PC-3 (cell line): ENCODE measurements at regions of chr7 and their contacts with region 1.

Region 1: GRCh38 chr7:99219985-99220384 is 12.1 kb upstream of the KPNA7 start:
- DNase-seq: no peak
- ATAC-seq: no peak
- H3K4me3 ChIP-seq: no peak overlapping the region
- H3K27ac ChIP-seq: no peak overlapping the region
- H3K4me1 ChIP-seq: peaks cover 10% of the 10 kb centered on the region
- H3K27me3 ChIP-seq: no peaks in the 10 kb centered on the region
- CTCF ChIP-seq: no peak

Region 2: GRCh38 chr7:99177165-99177564 is 42.8 kb before region 1 on chr7:
- CTCF ChIA-PET with region 1: no interaction called
- POLR2A ChIA-PET with region 1: no interaction called
- intact Hi-C with region 1: no loop called
- DNase-seq: no peak
- ATAC-seq: no peak
- H3K4me3 ChIP-seq: no peak overlapping the region
- H3K27ac ChIP-seq: no peak overlapping the region
- H3K4me1 ChIP-seq: no peaks in the 10 kb centered on the region
- H3K27me3 ChIP-seq: no peaks in the 10 kb centered on the region
- CTCF ChIP-seq: no peak

Region 3: DNA sequence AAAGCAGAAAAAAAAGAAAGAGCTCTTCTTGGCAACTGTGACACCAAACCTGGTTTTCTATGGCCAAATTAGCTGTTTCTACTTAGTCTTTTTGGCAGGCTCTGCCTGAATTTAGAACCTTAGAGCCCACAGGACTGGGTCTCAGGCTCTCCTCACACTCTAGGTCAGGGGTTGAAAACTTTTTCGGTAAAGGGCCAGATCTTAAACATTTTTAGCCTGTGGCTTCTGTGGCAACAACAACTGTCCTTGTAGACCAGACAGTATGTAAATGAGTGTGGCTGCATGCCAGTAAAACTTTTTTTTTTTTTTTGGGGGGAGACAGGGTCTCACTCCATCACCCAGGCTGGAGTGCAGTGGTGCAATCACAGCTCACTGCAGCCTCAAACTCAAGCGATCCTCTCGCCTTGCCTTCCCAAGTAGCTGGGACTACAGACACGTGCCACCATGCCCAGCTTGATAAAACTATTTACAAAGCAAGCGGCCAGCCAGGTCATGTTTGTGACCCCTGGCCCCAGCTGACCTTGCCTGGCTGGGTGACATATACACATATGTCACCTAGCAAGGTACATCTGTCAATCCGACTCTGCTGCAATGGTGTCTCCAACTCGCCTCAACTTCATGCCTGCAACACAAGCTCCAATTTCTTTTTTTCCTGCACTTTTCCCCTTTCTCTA is 29.5 kb before region 1 on chr7:
- CTCF ChIA-PET with region 1: no interaction called
- POLR2A ChIA-PET with region 1: interaction called, 27 read pairs
- intact Hi-C with region 1: no loop called
- DNase-seq: no peak
- ATAC-seq: no peak
- H3K4me3 ChIP-seq: no peak overlapping the region
- H3K27ac ChIP-seq: no peak overlapping the region
- H3K4me1 ChIP-seq: peaks cover 16% of the 10 kb centered on the region
- H3K27me3 ChIP-seq: no peaks in the 10 kb centered on the region
- CTCF ChIP-seq: no peak

Region 4: GRCh38 chr7:99267481-99267840 is 47.5 kb after region 1 on chr7:
- CTCF ChIA-PET with region 1: no interaction called
- POLR2A ChIA-PET with region 1: no interaction called
- intact Hi-C with region 1: loop called (anchors 5 kb)
- DNase-seq: peak; percentile 92
- ATAC-seq: peak; percentile 98
- H3K4me3 ChIP-seq: no peak overlapping the region
- H3K27ac ChIP-seq: peak overlapping the region; percentile 98
- H3K4me1 ChIP-seq: peaks cover 30% of the 10 kb centered on the region
- H3K27me3 ChIP-seq: no peaks in the 10 kb centered on the region
- CTCF ChIP-seq: no peak